ENCODE measurements at regions of chr9 and their contacts with region 1.

Region 1: DNA sequence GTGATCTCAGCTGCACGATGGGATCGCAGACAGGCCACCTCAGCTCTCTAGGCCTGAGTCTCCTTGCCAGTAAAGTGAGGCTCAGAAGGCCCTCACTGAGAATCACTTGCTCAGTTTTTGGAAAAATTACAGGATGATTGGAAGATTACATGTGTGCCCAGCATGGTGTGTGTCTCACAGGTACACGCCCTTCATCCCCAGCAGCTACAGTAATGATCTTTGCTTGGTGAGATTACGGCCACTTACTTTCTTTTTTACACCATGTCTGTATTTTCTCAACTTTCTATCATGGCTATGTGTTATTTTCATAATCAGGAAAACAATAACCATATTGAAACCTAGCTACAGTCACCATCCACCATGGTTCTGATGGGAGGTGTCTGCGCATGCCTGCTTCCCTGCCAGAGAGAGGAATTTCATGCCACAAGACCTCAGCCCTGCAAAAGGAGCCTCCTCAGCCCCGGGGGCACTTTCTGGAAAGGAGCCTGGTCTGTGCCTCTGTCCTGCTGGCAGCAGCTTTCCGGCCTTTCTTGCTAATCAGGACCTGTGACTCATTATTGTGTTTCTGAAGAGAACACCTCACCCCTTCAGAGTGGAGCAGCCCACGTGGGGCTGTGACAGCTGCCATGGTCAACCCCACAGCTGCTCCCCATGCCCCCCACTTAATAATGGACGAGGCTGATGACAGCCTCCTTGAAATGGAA is 64.2 kb upstream of the OLFM1 start:
- DNase-seq: no peak
- ATAC-seq: no peak
- H3K4me3 Mint-ChIP-seq: no peak overlapping the region
- H3K27ac Mint-ChIP-seq: no peak overlapping the region
- H3K4me1 Mint-ChIP-seq: no peaks in the 10 kb centered on the region
- H3K27me3 Mint-ChIP-seq: peaks cover 2% of the 10 kb centered on the region

Region 2: DNA sequence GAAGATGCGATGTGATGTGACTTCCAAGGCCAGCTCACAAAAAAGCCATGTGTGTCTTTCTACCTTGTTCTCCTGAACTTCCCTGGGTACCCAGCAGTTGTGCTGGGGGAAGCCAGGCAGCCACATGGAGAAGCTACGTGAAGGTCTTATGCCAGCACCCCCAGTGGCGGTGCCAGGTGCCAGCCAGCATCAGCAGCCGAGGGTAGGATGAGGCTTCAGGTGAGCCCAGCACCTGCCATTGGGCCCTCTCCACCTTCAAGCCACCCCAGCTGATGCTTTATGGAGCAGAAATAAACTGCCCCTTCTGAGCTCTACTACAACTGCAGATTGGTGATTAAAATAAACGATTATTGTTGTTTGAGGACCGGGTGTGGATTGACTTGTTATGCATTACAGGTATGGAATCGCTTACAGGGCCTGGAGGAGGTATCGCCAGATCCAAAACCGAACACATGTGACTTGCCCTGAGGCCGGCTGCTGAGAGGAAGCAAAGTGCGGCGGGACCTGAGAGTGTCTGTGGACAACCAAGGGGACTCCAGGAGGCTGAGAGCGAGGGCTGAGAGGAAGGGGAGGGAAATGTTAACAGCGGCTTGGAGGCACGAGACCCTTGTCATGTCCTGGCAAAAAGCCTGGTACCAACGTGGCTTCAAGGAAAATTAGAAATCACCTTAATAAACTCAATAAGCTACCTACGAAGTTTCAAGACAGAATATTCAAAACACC is 28.2 kb after region 1 on chr9:
- CTCF ChIA-PET with region 1: no interaction called
- POLR2A ChIA-PET with region 1: no interaction called
- intact Hi-C with region 1: loop called in 1 of 2 experiments (anchors 1 kb)
- DNase-seq: no peak
- ATAC-seq: no peak
- H3K4me3 Mint-ChIP-seq: no peak overlapping the region
- H3K27ac Mint-ChIP-seq: no peak overlapping the region
- H3K4me1 Mint-ChIP-seq: no peaks in the 10 kb centered on the region
- H3K27me3 Mint-ChIP-seq: peaks cover 23% of the 10 kb centered on the region

Measured in activated CD4-positive, alpha-beta T cell treated with anti-CD3 and anti-CD28 coated beads for 36 hours (primary cell).